Activated naive CD4-positive, alpha-beta T cell treated with anti-CD3 and anti-CD28 coated beads for 36 hours (primary cell): ENCODE measurements at regions of chr16 and their contacts with region 1.

Region 1: DNA sequence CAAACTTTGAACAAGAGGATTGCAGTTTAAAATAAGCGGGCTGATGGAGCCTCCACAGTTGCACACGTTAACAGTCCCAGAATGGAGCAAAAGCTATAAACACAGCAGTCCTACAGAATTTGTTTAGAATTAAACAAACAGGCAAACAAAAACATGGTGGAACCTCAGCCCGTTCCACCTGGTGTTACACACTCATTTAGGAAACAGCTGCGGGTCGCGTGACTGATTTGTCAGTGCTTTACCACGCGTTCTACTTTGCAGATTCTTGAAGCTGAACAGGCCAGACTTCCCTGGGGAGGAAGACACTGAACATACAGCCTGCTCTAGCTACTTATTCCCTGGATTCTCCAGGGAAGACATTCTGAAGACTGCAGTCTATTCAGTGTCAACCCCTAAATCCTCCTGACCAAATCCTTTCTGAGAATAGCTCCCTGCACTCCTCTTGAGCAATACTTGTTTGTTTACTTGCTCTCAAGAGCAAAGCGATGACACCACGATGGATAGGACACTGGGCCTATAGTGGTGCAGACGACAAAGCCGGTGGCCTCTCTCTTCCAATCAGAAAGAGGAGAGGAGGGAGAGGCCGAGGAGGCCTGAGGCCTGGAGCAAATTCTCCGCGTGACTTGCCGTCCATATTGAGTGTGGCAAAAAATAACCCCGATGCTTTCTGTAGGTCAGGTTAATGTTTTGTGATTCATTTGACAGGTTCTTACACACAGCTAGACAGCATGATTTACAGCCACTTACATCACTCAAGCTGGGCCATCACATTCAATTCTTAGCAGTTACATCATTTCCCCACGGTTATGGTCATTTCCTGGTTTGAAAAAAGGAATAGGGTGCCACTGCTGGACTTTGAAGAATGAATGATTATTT is 4.0 kb upstream of the MAP1LC3B start:
- DNase-seq: peak; percentile 94
- H3K4me3 Mint-ChIP-seq: peak overlapping the region; percentile 49
- H3K27ac Mint-ChIP-seq: peak overlapping the region; percentile 93
- H3K4me1 Mint-ChIP-seq: peaks cover 39% of the 10 kb centered on the region
- H3K27me3 Mint-ChIP-seq: peaks cover 2% of the 10 kb centered on the region

Region 2: DNA sequence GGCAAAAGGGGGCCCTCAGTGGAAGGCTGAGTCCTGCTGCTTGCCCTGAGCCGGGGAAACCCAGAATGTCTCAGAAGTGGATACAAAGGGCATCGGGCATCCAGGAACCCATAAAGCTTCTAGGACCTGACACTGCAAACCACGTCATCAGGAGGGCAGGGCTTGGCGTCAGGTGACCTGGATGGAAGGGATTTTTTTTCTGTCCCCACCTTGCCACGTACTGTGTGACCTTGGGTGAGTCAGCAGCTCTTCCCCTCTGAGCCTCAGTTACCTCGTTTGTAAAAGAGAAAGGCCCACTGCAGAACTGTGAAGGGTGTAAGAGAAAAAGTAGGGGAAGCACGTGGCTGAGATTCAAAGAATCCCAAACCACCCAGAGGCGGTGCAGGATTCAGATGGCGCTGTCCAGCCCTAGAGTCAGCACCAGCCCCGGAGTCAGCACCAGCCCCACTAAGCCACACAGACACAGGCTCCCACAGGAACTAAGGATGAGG is 124.7 kb before region 1 on chr16:
- CTCF ChIA-PET with region 1: no interaction called
- intact Hi-C with region 1: no loop called
- DNase-seq: no peak
- H3K4me3 Mint-ChIP-seq: no peak overlapping the region
- H3K27ac Mint-ChIP-seq: no peak overlapping the region
- H3K4me1 Mint-ChIP-seq: no peaks in the 10 kb centered on the region
- H3K27me3 Mint-ChIP-seq: no peaks in the 10 kb centered on the region

Region 3: DNA sequence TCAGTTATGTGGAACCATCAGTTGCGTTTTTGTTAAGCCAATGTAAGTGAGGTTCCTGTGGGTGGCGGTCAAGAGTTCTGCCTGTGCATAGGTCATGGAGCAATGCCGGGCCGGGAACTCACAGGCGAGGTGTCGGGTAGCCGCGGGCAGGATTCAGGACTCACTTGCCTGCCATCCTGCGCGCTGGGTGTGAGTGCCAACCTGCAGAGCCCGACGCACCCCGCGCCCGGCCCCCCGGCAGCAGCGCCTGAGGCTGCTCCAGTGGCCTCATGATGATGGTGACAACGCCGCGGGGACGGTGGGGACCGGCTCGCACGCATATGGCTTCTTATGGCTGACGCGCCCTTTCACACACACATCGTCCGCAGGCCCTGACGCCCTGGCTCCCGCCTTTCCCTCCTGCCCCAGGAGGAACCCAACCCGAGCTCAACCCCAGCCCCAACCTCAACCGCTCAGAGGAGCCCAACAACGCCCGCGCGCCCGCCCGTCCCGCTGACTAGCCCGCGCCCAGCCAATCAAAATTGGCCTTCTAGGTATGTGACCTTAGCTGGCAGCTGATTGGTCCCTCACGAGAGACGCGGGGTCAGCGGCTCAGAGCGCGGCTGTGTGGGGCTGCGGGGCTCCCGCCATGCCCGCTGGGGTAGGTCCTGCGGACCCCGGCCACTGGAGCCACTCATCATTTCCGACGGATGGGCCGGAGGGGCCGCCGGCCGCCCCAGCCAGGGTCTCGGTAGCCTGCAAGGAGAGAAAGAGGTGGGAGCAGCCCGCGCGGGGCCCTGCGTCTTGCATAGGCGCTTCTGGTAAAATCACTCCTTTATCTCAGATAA is 71.0 kb before region 1 on chr16 and contains the start of gene C16orf95:
- CTCF ChIA-PET with region 1: interaction called, 3 read pairs
- intact Hi-C with region 1: loop called (anchors 1 kb)
- DNase-seq: peak; percentile 98
- H3K4me3 Mint-ChIP-seq: peak within 1 kb of the TSS; percentile 88
- H3K27ac Mint-ChIP-seq: peak within 1 kb of the TSS; percentile 91
- H3K4me1 Mint-ChIP-seq: peaks cover 17% of the 10 kb centered on the region
- H3K27me3 Mint-ChIP-seq: no peaks in the 10 kb centered on the region
- total RNA-seq, gene C16orf95: 17.2 to 23.4 TPM

Region 4: GRCh38 chr16:87464691-87465300 is 76.6 kb after region 1 on chr16:
- CTCF ChIA-PET with region 1: no interaction called
- intact Hi-C with region 1: loop called (anchors 2 kb)
- DNase-seq: peak; percentile 74
- H3K4me3 Mint-ChIP-seq: peak overlapping the region; percentile 69
- H3K27ac Mint-ChIP-seq: peak overlapping the region; percentile 92
- H3K4me1 Mint-ChIP-seq: peaks cover 51% of the 10 kb centered on the region
- H3K27me3 Mint-ChIP-seq: no peaks in the 10 kb centered on the region

Region 5: GRCh38 chr16:87540945-87541877 is 153.0 kb after region 1 on chr16:
- CTCF ChIA-PET with region 1: no interaction called
- intact Hi-C with region 1: loop called (anchors 5 kb)
- DNase-seq: no peak
- H3K4me3 Mint-ChIP-seq: no peak overlapping the region
- H3K27ac Mint-ChIP-seq: no peak overlapping the region
- H3K4me1 Mint-ChIP-seq: peaks cover 12% of the 10 kb centered on the region
- H3K27me3 Mint-ChIP-seq: peaks cover 18% of the 10 kb centered on the region

Region 6: DNA sequence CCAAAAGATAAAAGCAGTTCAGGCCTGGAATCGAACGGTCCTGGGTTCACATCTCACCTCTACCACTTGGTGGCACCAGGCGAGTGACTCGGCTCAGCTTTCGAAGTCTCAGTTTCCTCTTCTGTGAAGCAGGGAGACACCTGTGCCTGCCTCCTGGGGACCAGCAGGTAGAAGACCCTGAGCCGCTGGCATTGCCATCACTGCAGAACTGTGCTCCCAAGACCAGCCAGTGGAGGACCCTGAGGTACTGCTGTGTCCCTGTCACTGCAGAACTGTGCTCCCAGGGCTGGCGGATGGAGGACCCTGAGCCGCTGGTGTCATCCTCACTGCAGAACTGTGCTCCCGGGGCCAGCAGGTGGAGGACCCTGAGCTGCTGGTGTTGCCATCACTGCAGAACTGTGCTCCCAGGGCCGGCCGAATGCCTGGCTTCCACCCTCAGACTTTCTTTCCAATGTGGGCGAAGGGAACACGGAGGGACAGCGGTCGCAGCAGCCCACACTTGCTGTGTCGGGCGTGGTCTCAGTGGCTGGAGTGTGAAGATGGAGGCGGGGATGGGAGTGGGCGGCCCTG is 489.8 kb after region 1 on chr16:
- CTCF ChIA-PET with region 1: no interaction called
- intact Hi-C with region 1: loop called (anchors 5 kb)
- DNase-seq: peak; percentile 71
- H3K4me3 Mint-ChIP-seq: no peak overlapping the region
- H3K27ac Mint-ChIP-seq: no peak overlapping the region
- H3K4me1 Mint-ChIP-seq: peaks cover 47% of the 10 kb centered on the region
- H3K27me3 Mint-ChIP-seq: peaks cover 5% of the 10 kb centered on the region